Activated naive CD4-positive, alpha-beta T cell treated with anti-CD3 and anti-CD28 coated beads for 36 hours (primary cell): ENCODE measurements at regions of chr12 and their contacts with region 1.

Region 1: GRCh38 chr12:69324797-69325466 is 23.2 kb upstream of the LYZ start:
- DNase-seq: no peak
- H3K4me3 Mint-ChIP-seq: no peak overlapping the region
- H3K27ac Mint-ChIP-seq: no peak overlapping the region
- H3K4me1 Mint-ChIP-seq: peaks cover 39% of the 10 kb centered on the region
- H3K27me3 Mint-ChIP-seq: no peaks in the 10 kb centered on the region

Region 2: DNA sequence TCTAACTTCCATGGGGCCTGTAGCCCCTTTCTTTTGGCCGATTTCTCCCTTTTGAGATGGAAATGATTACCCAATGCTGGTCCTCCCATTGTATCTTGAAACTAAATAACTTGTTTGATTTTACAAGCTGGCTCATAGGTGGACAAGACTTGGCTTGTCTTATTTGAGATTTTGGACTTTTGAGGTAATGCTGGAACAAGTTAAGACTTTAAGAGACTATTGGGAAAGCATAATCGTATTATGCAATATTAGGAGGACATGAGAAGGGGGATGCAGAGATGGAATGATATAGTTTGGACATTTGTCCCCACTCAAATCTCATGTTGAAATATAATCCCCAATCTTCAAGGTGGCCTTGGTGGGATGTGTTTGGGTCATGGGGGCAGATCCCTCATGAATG is 26.0 kb before region 1 on chr12:
- CTCF ChIA-PET with region 1: no interaction called
- intact Hi-C with region 1: loop called (anchors 2 kb)
- DNase-seq: no peak
- H3K4me3 Mint-ChIP-seq: no peak overlapping the region
- H3K27ac Mint-ChIP-seq: no peak overlapping the region
- H3K4me1 Mint-ChIP-seq: peaks cover 12% of the 10 kb centered on the region
- H3K27me3 Mint-ChIP-seq: peaks cover 6% of the 10 kb centered on the region

Region 3: GRCh38 chr12:69595689-69596088 is 270.8 kb after region 1 on chr12:
- CTCF ChIA-PET with region 1: no interaction called
- intact Hi-C with region 1: no loop called
- DNase-seq: no peak
- H3K4me3 Mint-ChIP-seq: no peak overlapping the region
- H3K27ac Mint-ChIP-seq: no peak overlapping the region
- H3K4me1 Mint-ChIP-seq: peaks cover 16% of the 10 kb centered on the region
- H3K27me3 Mint-ChIP-seq: no peaks in the 10 kb centered on the region